Caco-2 (cell line): ENCODE measurements at regions of chr6 and their contacts with region 1.

Region 1: GRCh38 chr6:24581084-24581669 is 64.8 kb downstream of the KIAA0319 start:
- DNase-seq: peak; percentile 78 to 80
- H3K4me3 ChIP-seq: no peak overlapping the region
- H3K4me3 Mint-ChIP-seq: no peak overlapping the region
- H3K27ac Mint-ChIP-seq: no peak overlapping the region
- H3K4me1 ChIP-seq: 0 out of 2 replicates have a peak, but pooled peaks cover 5% of the 10 kb centered on the region
- H3K4me1 Mint-ChIP-seq: peaks cover 8% of the 10 kb centered on the region
- H3K27me3 ChIP-seq: no peaks in the 10 kb centered on the region
- H3K27me3 Mint-ChIP-seq: no peaks in the 10 kb centered on the region
- CTCF ChIP-seq: peak; percentile 68 to 85

Region 2: GRCh38 chr6:24431045-24431451 is 150.1 kb before region 1 on chr6:
- CTCF ChIA-PET with region 1: no interaction called
- POLR2A ChIA-PET with region 1: no interaction called
- intact Hi-C with region 1: loop called (anchors 5 kb)
- DNase-seq: peak in 1 of 2 experiments; percentile 59
- H3K4me3 ChIP-seq: no peak overlapping the region
- H3K4me3 Mint-ChIP-seq: no peak overlapping the region
- H3K27ac Mint-ChIP-seq: no peak overlapping the region
- H3K4me1 ChIP-seq: no peaks in the 10 kb centered on the region
- H3K4me1 Mint-ChIP-seq: peaks cover 16% of the 10 kb centered on the region
- H3K27me3 ChIP-seq: no peaks in the 10 kb centered on the region
- H3K27me3 Mint-ChIP-seq: no peaks in the 10 kb centered on the region
- CTCF ChIP-seq: peak; percentile 43 to 60

Region 3: GRCh38 chr6:24646782-24647181 is 65.6 kb after region 1 on chr6:
- CTCF ChIA-PET with region 1: interaction called, 4 read pairs
- POLR2A ChIA-PET with region 1: no interaction called
- intact Hi-C with region 1: loop called (anchors 10 kb)
- DNase-seq: no peak
- H3K4me3 ChIP-seq: peak overlapping the region; percentile 54
- H3K4me3 Mint-ChIP-seq: peak overlapping the region; percentile 88
- H3K27ac Mint-ChIP-seq: peak overlapping the region; percentile 87
- H3K4me1 ChIP-seq: no peaks in the 10 kb centered on the region
- H3K4me1 Mint-ChIP-seq: peaks cover 9% of the 10 kb centered on the region
- H3K27me3 ChIP-seq: no peaks in the 10 kb centered on the region
- H3K27me3 Mint-ChIP-seq: no peaks in the 10 kb centered on the region
- CTCF ChIP-seq: no peak

Region 4: GRCh38 chr6:24689964-24690363 is 108.8 kb after region 1 on chr6:
- CTCF ChIA-PET with region 1: interaction called, 4 read pairs
- POLR2A ChIA-PET with region 1: no interaction called
- intact Hi-C with region 1: loop called (anchors 1 kb)
- DNase-seq: no peak
- H3K4me3 ChIP-seq: no peak overlapping the region
- H3K4me3 Mint-ChIP-seq: no peak overlapping the region
- H3K27ac Mint-ChIP-seq: no peak overlapping the region
- H3K4me1 ChIP-seq: no peaks in the 10 kb centered on the region
- H3K4me1 Mint-ChIP-seq: peaks cover 19% of the 10 kb centered on the region
- H3K27me3 ChIP-seq: no peaks in the 10 kb centered on the region
- H3K27me3 Mint-ChIP-seq: no peaks in the 10 kb centered on the region
- CTCF ChIP-seq: no peak

Region 5: GRCh38 chr6:24788048-24788665 is 207.0 kb after region 1 on chr6:
- CTCF ChIA-PET with region 1: no interaction called
- POLR2A ChIA-PET with region 1: no interaction called
- intact Hi-C with region 1: no loop called
- DNase-seq: no peak
- H3K4me3 ChIP-seq: no peak overlapping the region
- H3K4me3 Mint-ChIP-seq: no peak overlapping the region
- H3K27ac Mint-ChIP-seq: no peak overlapping the region
- H3K4me1 ChIP-seq: no peaks in the 10 kb centered on the region
- H3K4me1 Mint-ChIP-seq: no peaks in the 10 kb centered on the region
- H3K27me3 ChIP-seq: no peaks in the 10 kb centered on the region
- H3K27me3 Mint-ChIP-seq: no peaks in the 10 kb centered on the region
- CTCF ChIP-seq: no peak

Region 6: GRCh38 chr6:25070547-25071366 is 489.6 kb after region 1 on chr6:
- CTCF ChIA-PET with region 1: no interaction called
- POLR2A ChIA-PET with region 1: no interaction called
- intact Hi-C with region 1: loop called (anchors 2 kb)
- DNase-seq: peak; percentile 69 to 71
- H3K4me3 ChIP-seq: no peak overlapping the region
- H3K4me3 Mint-ChIP-seq: no peak overlapping the region
- H3K27ac Mint-ChIP-seq: no peak overlapping the region
- H3K4me1 ChIP-seq: no peaks in the 10 kb centered on the region
- H3K4me1 Mint-ChIP-seq: no peaks in the 10 kb centered on the region
- H3K27me3 ChIP-seq: no peaks in the 10 kb centered on the region
- H3K27me3 Mint-ChIP-seq: no peaks in the 10 kb centered on the region
- CTCF ChIP-seq: peak; percentile 78 to 83